ENCODE measurements at regions of chr15 and their contacts with region 1.

Region 1: GRCh38 chr15:100311154-100311625 is 30.6 kb downstream of the ADAMTS17 start:
- DNase-seq: no peak
- H3K4me3 ChIP-seq: no peak overlapping the region
- H3K27ac ChIP-seq: peak overlapping the region; percentile 21 to 77 (median 68)
- H3K4me1 ChIP-seq: peaks cover 24 to 46% (median 31%) of the 10 kb centered on the region in 3 donors
- H3K27me3 ChIP-seq: no peaks in the 10 kb centered on the region
- CTCF ChIP-seq: no peak
- POLR2A ChIP-seq: no peak

Region 2: GRCh38 chr15:100234158-100235029 is 76.8 kb before region 1 on chr15:
- intact Hi-C with region 1: loop called (anchors 10 kb)
- DNase-seq: no peak
- H3K4me3 ChIP-seq: no peak overlapping the region
- H3K27ac ChIP-seq: peak overlapping the region in 2 of 4 donors; percentile 46 to 65
- H3K4me1 ChIP-seq: peaks cover 0 to 13% (median 0%) of the 10 kb centered on the region in 3 donors
- H3K27me3 ChIP-seq: no peaks in the 10 kb centered on the region
- CTCF ChIP-seq: no peak
- POLR2A ChIP-seq: no peak

Region 3: GRCh38 chr15:100255644-100256043 is 55.5 kb before region 1 on chr15:
- intact Hi-C with region 1: no loop called
- DNase-seq: no peak
- H3K4me3 ChIP-seq: no peak overlapping the region
- H3K27ac ChIP-seq: no peak overlapping the region
- H3K4me1 ChIP-seq: peaks cover 0 to 12% (median 0%) of the 10 kb centered on the region in 3 donors
- H3K27me3 ChIP-seq: no peaks in the 10 kb centered on the region
- CTCF ChIP-seq: no peak
- POLR2A ChIP-seq: no peak